H1 (cell line): ENCODE measurements at regions of chr7 and their contacts with region 1.

Region 1: GRCh38 chr7:64665980-64666662 is at the start of gene ZNF107:
- DNase-seq: peak; percentile 79
- H3K4me3 ChIP-seq: peak within 1 kb of the TSS; percentile 69 to 93 (median 82)
- H3K27ac ChIP-seq: peak within 1 kb of the TSS; percentile 84
- H3K4me1 ChIP-seq: no peaks in the 10 kb centered on the region
- H3K27me3 ChIP-seq: no peaks in the 10 kb centered on the region
- CTCF ChIP-seq: no peak
- EP300 ChIP-seq: no peak
- POLR2A ChIP-seq: peak; percentile 83 to 96
- RAD21 ChIP-seq: no peak
- total RNA-seq, gene ZNF107: 27.5 and 31.0 TPM in 2 replicates

Region 2: DNA sequence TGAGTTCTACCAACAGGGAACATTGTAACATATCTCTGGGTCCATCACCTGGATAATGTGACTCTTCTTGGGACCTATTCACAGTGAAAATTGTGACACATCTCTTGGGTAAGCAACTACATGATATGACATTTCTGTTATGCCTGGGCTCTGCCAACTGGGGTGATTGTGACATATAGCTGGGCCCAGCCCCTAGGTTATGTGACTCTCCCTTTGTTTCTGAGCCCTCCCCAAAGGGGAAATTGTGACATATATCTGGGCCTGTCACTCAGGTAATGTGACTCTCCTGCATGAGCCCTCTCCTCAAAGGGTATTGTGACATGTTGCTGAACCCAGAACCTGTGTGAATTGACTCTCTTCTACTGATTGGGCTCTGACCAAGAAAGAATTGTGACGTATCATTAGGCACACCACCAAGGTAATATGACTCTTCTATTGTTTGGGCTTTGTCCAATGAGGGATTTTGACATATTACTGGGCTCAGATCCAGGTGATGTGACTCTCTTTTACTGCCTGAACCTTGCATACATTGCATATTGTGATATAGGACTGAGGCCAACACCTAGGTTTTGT is 22.5 kb before region 1 on chr7:
- CTCF ChIA-PET with region 1: no interaction called
- POLR2A ChIA-PET with region 1: no interaction called
- DNase-seq: no peak
- H3K4me3 ChIP-seq: no peak overlapping the region
- H3K27ac ChIP-seq: no peak overlapping the region
- H3K4me1 ChIP-seq: no peaks in the 10 kb centered on the region
- H3K27me3 ChIP-seq: no peaks in the 10 kb centered on the region
- CTCF ChIP-seq: no peak
- EP300 ChIP-seq: no peak
- POLR2A ChIP-seq: no peak
- RAD21 ChIP-seq: no peak

Region 3: DNA sequence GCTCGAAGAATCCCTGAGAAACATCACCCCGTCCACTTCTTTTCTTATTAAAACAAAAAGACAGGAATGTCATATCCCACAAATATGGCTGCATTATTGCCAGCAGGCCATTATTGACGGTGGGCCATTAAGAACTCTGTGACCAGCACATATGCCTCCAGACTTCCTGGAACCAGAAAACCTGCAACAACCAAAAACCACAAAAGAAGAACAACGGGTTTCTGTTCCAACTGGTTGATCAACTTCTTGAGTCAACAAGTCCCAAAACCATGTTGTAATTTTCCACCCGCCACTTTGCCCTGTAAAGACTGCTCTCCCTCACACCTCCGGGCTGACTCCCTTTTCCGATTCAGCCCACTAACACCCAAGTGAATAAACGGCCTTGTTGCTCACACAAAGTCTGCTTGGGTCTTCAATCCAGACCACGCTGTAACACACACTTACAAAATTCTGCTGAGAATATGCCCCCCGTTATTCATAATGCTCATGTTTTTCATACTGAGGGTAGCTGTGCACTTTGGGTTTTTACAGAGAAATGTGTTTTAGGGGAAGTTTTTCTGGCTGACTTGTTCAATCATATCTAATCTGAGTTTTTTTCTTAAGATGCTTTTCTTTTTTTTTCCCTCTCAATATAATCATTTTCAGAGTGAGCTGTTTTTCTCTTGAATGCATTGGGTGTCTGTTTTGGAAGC is 20.5 kb after region 1 on chr7:
- CTCF ChIA-PET with region 1: no interaction called
- POLR2A ChIA-PET with region 1: interaction called, 11 read pairs
- DNase-seq: no peak
- H3K4me3 ChIP-seq: no peak overlapping the region
- H3K27ac ChIP-seq: no peak overlapping the region
- H3K4me1 ChIP-seq: peaks cover 0 to 2% (median 0%) of the 10 kb centered on the region in 4 experiments; a peak in 1 of 7 replicates
- H3K27me3 ChIP-seq: no peaks in the 10 kb centered on the region
- CTCF ChIP-seq: no peak
- EP300 ChIP-seq: no peak
- POLR2A ChIP-seq: no peak
- RAD21 ChIP-seq: no peak

Region 4: DNA sequence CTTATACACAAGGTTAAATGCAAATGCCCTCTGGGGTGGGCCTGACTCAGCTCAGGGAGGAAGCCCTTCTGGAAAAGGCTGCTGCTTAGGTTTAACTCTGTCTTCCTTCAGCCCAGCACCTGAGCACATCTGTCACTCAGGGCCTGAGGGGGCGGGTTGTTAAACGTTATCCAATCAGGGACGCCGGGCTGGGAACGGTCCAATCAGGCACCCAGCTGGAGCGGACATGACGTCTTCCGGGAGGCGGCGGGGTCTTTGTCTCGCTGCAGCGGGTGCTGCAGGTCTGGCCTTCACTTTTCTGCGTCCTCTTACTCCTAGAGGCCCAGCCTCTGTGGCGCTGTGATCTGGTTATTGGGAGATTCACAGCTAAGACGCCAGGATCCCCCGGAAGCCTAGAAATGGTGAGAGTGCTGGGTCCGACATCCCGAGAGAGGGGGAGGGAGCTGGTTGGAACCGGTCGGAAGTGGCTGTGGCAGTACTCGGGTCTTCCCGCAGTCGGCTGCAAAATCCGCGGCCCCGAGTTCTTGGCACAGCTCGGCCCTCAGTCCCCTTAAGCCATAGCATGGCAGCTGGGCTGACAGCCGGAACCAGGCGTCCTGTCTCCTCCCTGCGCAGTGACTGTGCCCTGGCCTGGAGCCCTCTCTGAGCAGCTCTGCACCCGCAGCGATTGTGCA is 128.2 kb after region 1 on chr7 and contains the start of gene ZNF138:
- CTCF ChIA-PET with region 1: no interaction called
- POLR2A ChIA-PET with region 1: interaction called, 12 read pairs
- DNase-seq: peak; percentile 92 to 93
- H3K4me3 ChIP-seq: peak within 1 kb of the TSS; percentile 58 to 96 (median 92)
- H3K27ac ChIP-seq: peak within 1 kb of the TSS; percentile 92
- H3K4me1 ChIP-seq: no peaks in the 10 kb centered on the region; a peak in 1 of 7 replicates
- H3K27me3 ChIP-seq: no peaks in the 10 kb centered on the region
- CTCF ChIP-seq: no peak
- EP300 ChIP-seq: no peak
- POLR2A ChIP-seq: peak; percentile 72 to 93
- RAD21 ChIP-seq: no peak; a peak in 1 of 4 replicates
- total RNA-seq, gene ZNF138: 20.2 and 22.6 TPM in 2 replicates